ENCODE measurements at regions of chr6 and their contacts with region 1.

Region 1: GRCh38 chr6:87589693-87590549 is at the starts of genes ORC3 and RARS2:
- DNase-seq: peak; percentile 99
- H3K4me3 Mint-ChIP-seq: peak within 1 kb of the TSS; percentile 92
- H3K27ac Mint-ChIP-seq: peak within 1 kb of the TSS; percentile 84
- H3K4me1 Mint-ChIP-seq: peaks cover 44% of the 10 kb centered on the region
- H3K27me3 Mint-ChIP-seq: no peaks in the 10 kb centered on the region
- total RNA-seq, gene ORC3: 35.5 and 38.6 TPM in 2 replicates
- total RNA-seq, gene RARS2: 22.6 and 22.7 TPM in 2 replicates

Region 2: GRCh38 chr6:87322304-87323212 is 267.4 kb before region 1 on chr6 and contains the start of gene SMIM8:
- intact Hi-C with region 1: loop called (anchors 5 kb)
- DNase-seq: peak; percentile 97
- H3K4me3 Mint-ChIP-seq: peak within 1 kb of the TSS; percentile 99
- H3K27ac Mint-ChIP-seq: peak within 1 kb of the TSS; percentile 91
- H3K4me1 Mint-ChIP-seq: peaks cover 11% of the 10 kb centered on the region
- H3K27me3 Mint-ChIP-seq: peaks cover 8% of the 10 kb centered on the region
- total RNA-seq, gene SMIM8: 8.1 and 10.5 TPM in 2 replicates

Region 3: GRCh38 chr6:87393022-87393622 is 196.8 kb before region 1 on chr6:
- intact Hi-C with region 1: loop called (anchors 10 kb)
- DNase-seq: peak; percentile 82
- H3K4me3 Mint-ChIP-seq: no peak overlapping the region
- H3K27ac Mint-ChIP-seq: no peak overlapping the region
- H3K4me1 Mint-ChIP-seq: no peaks in the 10 kb centered on the region
- H3K27me3 Mint-ChIP-seq: no peaks in the 10 kb centered on the region

Region 4: DNA sequence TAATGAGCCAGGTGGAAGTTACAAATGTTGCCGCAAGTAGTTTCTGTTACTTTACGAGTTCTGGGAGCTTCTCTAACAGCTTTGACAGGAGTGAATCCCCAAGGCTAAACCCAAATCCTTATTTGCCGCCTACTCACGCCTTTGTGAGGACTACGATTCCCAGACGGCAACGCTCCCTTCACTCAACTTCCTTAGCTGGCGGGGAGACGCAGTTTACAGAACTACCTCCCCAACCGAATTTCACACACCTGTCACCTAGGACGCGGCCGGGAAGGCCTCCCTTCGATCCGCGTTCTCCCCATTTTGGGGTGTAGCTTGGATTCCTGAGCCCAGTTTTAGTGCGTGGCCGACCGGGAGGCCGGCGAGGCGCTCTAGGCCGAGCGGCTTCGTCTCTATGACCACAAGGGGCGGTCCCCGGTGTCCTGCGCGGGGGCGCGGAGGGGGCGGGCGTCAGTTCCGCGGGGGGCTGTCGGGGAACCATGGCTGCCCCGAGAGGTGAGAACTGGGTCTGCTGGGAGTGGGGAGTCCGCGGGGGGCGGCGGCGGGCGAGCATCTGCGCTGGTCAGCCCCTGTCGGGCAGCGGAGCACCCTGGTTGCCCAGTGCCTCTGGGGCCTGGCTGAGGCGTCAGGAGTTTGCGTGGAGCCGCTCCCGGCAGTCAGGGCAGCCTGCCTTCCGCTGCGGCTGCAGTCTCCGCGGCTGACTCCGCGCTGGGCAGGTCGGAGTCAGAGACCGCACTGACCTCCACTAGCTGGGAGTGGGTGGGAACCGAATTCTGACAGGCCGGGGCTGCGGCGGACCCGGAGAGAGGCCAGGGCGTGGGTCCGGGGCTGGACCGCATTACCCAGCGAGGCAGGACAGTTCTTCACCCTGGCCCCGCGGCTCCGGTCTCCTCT is 117.1 kb before region 1 on chr6 and contains the start of gene SLC35A1:
- intact Hi-C with region 1: loop called (anchors 1 kb)
- DNase-seq: peak; percentile 96
- H3K4me3 Mint-ChIP-seq: peak within 1 kb of the TSS; percentile 95
- H3K27ac Mint-ChIP-seq: peak within 1 kb of the TSS; percentile 97
- H3K4me1 Mint-ChIP-seq: peaks cover 17% of the 10 kb centered on the region
- H3K27me3 Mint-ChIP-seq: peaks cover 8% of the 10 kb centered on the region
- total RNA-seq, gene SLC35A1: 8.8 and 9.1 TPM in 2 replicates

Region 5: GRCh38 chr6:87656857-87657256 is 66.9 kb after region 1 on chr6:
- intact Hi-C with region 1: loop called (anchors 10 kb)
- DNase-seq: peak; percentile 72
- H3K4me3 Mint-ChIP-seq: peak overlapping the region; percentile 64
- H3K27ac Mint-ChIP-seq: peak overlapping the region; percentile 67
- H3K4me1 Mint-ChIP-seq: peaks cover 30% of the 10 kb centered on the region
- H3K27me3 Mint-ChIP-seq: no peaks in the 10 kb centered on the region

Region 6: GRCh38 chr6:88963139-88964090 is 1373.5 kb after region 1 on chr6 and contains the start of gene RNGTT:
- intact Hi-C with region 1: loop called (anchors 5 kb)
- DNase-seq: peak; percentile 99
- H3K4me3 Mint-ChIP-seq: peak within 1 kb of the TSS; percentile 98
- H3K27ac Mint-ChIP-seq: peak within 1 kb of the TSS; percentile 94
- H3K4me1 Mint-ChIP-seq: peaks cover 25% of the 10 kb centered on the region
- H3K27me3 Mint-ChIP-seq: peaks cover 4% of the 10 kb centered on the region
- total RNA-seq, gene RNGTT: 23.8 and 25.9 TPM in 2 replicates